ENCODE measurements at regions of chr7 and their contacts with region 1.

Region 1: DNA sequence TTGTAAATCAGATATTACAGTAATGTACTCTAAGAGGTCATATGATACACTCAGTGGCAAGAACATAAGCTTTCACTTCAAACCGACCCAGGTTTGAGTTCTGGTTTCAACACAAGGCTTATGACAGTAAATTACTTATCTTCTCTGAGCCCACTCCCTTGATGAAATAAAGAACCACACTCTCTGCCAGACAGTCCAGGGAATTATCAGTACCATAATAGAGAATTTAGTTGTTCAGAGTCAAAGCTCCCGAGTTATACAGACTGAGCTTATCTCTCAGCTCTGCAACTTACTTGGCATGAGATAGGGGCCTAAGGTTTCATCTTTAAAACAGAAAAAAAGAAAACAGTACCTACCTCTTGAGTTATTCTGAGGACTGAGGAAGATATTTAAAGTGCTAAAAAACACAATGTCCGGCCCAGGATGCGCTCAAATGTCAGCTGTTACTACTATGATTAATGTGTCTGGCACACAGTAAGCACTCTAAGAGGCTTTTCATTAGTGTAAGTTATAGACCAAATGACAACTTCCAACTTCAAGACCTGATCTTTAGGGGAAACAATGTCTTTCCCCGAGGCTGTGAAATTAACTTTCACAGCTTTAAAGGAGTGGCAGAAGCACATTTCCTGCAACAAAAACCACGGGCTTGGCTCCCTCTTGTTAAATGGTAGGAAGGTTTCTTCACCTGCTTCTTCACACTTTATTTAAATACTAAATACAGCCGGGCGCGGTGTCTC is 38.1 kb downstream of the UBE2H start:
- DNase-seq: no peak
- ATAC-seq: peak; percentile 14 to 53
- H3K4me3 ChIP-seq: peak overlapping the region; percentile 6 to 16 (median 9)
- H3K27ac ChIP-seq: peak overlapping the region; percentile 76 to 89 (median 77)
- H3K4me1 ChIP-seq: peaks cover 62 to 72% of the 10 kb centered on the region in 2 donors
- H3K27me3 ChIP-seq: no peaks in the 10 kb centered on the region
- CTCF ChIP-seq: no peak
- POLR2A ChIP-seq: no peak

Region 2: DNA sequence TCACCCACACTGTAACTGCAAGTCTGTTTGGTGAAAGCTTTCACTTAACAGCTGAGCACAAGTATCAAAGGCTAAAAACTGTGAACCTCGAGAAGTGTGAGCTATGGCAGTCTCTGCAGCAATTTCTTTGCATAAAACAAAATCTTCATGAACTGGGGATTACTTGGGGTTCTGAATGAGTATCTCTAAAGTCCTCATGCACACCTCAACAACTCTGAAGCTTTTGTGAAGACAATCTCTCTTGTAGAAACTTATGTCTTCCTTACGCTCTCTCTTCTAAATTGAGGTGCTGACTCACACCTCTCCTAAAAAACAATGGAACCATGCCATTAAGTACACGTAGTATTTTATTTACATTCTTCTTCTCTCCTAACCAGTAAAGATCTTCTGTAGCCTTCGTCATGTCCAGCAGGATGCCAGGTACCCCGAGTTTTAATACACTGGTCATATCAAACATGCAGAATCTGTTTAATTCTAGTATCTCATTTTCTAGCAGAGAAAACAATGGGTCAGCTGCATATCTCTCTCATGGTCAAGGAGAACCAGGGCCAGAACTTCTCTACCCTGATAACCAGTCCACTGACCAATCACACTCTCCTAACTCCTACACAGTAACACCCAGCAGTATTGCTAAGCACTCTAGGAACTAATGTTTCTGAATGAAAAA is 38.8 kb before region 1 on chr7:
- in situ Hi-C with region 1: no loop called
- intact Hi-C with region 1: loop called (anchors 5 kb)
- DNase-seq: no peak
- ATAC-seq: peak; percentile 69 to 75
- H3K4me3 ChIP-seq: peak overlapping the region; percentile 11 to 29 (median 18)
- H3K27ac ChIP-seq: peak overlapping the region; percentile 72 to 86 (median 78)
- H3K4me1 ChIP-seq: peaks cover 45 to 55% of the 10 kb centered on the region in 2 donors
- H3K27me3 ChIP-seq: no peaks in the 10 kb centered on the region
- CTCF ChIP-seq: no peak
- POLR2A ChIP-seq: peak in 1 of 2 donors; percentile 27

Region 3: DNA sequence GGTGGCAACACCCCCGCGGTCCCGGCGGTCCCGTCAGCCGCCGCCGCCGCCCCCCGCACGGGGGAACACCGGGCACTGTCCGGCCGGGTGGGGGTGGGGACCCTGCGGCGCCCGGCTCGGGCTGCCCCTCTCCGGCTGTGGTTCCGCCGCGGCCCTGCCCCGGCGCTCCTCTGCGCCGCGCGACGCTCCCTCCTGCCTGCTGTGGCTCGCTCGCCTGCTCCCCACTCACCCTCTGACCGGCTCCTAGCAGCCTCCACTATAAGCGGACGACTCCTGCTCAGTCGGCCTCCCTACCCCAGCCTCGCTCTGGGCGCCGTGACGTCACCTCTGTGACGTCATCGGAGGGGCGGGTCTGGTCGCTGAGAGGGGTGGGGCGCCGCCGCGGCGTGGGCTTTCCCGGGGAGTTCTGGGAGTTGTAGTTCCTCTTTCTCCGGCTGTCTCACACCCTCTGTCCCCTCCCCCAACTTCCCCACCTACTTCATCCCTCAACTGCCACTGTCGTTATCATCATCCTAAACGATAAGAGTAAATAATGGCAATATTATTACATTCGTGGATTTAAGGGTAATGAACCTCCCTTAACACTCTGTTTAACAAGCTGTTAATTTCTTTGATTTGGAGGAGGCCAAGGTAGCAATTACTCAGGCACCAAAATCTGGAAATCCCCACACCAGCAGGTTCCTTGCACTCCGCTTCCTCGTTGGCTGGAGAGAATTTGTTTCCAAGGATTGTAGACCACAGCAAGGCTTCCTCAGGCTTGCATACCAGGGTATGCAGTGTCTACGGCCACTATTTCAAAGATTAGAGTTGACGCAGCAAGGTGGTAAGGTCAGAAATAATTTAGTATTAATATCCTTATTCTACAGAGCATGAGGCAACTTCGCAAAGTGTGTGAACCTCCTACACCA is 38.2 kb after region 1 on chr7 and contains the start of gene UBE2H:
- in situ Hi-C with region 1: no loop called
- intact Hi-C with region 1: loop called (anchors 2 kb)
- DNase-seq: peak; percentile 88 to 90
- ATAC-seq: peak; percentile 71 to 76
- H3K4me3 ChIP-seq: peak within 1 kb of the TSS; percentile 81 to 97 (median 86)
- H3K27ac ChIP-seq: peak within 1 kb of the TSS; percentile 92 to 99 (median 99)
- H3K4me1 ChIP-seq: peaks cover 18 to 23% of the 10 kb centered on the region in 2 donors
- H3K27me3 ChIP-seq: no peaks in the 10 kb centered on the region
- CTCF ChIP-seq: peak in 2 of 5 experiments; percentile 8 to 25
- POLR2A ChIP-seq: peak; percentile 98 to 100
- total RNA-seq, gene UBE2H: 82.7 to 162 (median 103) TPM

Region 4: DNA sequence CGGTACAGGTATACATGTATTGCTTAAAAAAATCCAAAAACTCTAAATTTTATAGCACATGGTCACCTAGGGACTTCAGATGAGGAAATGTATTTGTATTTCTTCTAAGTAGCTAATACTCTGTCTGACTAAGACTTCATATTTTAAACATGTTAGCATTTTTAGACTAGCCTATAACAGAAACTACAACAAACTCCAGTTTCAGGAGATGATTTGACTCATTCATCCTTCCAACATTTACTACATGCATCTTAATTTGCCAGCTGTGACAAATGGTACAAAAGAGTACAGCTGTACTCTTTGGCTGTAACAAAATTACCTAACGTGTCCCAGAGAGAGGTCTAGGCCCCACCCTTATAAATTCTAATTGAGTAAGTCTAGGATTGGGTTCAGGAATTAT is 268.3 kb after region 1 on chr7:
- in situ Hi-C with region 1: no loop called
- intact Hi-C with region 1: no loop called
- DNase-seq: no peak
- ATAC-seq: no peak
- H3K4me3 ChIP-seq: no peak overlapping the region
- H3K27ac ChIP-seq: no peak overlapping the region
- H3K4me1 ChIP-seq: no peaks in the 10 kb centered on the region
- H3K27me3 ChIP-seq: no peaks in the 10 kb centered on the region
- CTCF ChIP-seq: no peak
- POLR2A ChIP-seq: no peak